H1 (cell line): ENCODE measurements at regions of chr1 and their contacts with region 1.

Region 1: GRCh38 chr1:155172732-155173477 is at the start of gene KRTCAP2:
- DNase-seq: peak; percentile 94 to 95
- H3K4me3 ChIP-seq: peak within 1 kb of the TSS; percentile 70 to 95 (median 86)
- H3K27ac ChIP-seq: peak within 1 kb of the TSS; percentile 68
- H3K4me1 ChIP-seq: peaks cover 3 to 23% (median 8%) of the 10 kb centered on the region in 4 experiments; a peak in 6 of 7 replicates
- H3K27me3 ChIP-seq: no peaks in the 10 kb centered on the region
- CTCF ChIP-seq: peak in 2 of 3 experiments; percentile 87 to 99; a peak in 3 of 4 replicates
- EP300 ChIP-seq: no peak; a peak in 1 of 3 replicates
- POLR2A ChIP-seq: peak in 1 of 2 experiments; percentile 74; a peak in 2 of 3 replicates
- RAD21 ChIP-seq: peak; percentile 22 to 44; a peak in 3 of 4 replicates
- total RNA-seq, gene KRTCAP2: 146 TPM in 2 replicates

Region 2: DNA sequence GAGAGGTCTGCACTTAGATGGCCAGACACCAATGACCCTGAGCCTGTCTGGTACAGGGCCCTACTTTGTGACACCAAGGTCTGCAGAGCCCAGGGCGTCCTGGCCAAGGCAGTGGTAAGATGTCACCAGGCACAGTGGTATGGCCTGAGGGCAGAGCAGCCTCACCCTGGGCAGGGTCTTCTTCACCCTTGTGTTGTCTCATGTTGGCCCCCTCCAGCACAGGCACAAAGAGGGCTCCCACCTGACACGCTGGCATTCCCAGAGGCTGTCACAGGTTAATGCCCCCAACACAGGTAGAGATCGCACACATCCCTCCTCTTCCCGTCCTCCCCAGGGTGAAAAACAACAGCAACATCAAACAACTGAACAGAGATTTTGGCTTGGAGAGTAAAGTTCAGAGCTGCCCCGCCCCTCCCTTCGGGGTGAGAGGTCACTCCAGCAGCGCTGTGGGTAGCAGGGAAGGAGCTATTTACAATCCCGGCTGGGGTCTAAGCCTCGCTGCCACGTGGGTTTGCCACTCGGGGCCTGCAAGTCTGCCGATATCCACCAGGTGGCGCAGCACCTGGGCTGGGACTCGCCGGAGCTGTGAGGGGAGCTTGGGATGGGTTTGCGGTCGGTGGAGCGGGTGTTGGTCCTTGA is 81.7 kb before region 1 on chr1:
- CTCF ChIA-PET with region 1: interaction called, 215 read pairs
- POLR2A ChIA-PET with region 1: interaction called, 7 read pairs
- DNase-seq: peak; percentile 68 to 97
- H3K4me3 ChIP-seq: 0 out of 8 replicates have a peak overlapping the region, but pooled peaks of 1 of the 4 experiments have one; percentile 28
- H3K27ac ChIP-seq: no peak overlapping the region
- H3K4me1 ChIP-seq: peaks cover 0 to 17% (median 14%) of the 10 kb centered on the region in 4 experiments; a peak in 6 of 7 replicates
- H3K27me3 ChIP-seq: peaks cover 0 to 13% (median 2%) of the 10 kb centered on the region in 4 experiments; a peak in 2 of 7 replicates
- CTCF ChIP-seq: peak in 2 of 3 experiments; percentile 98; a peak in 3 of 4 replicates
- EP300 ChIP-seq: no peak
- POLR2A ChIP-seq: no peak
- RAD21 ChIP-seq: peak; percentile 80 to 87

Region 3: GRCh38 chr1:155127105-155127964 is 45.6 kb before region 1 on chr1 and contains the start of gene EFNA1:
- CTCF ChIA-PET with region 1: interaction called, 187 read pairs
- POLR2A ChIA-PET with region 1: interaction called, 24 read pairs
- DNase-seq: peak in 1 of 2 experiments; percentile 63
- H3K4me3 ChIP-seq: peak within 1 kb of the TSS; percentile 45 to 71 (median 64)
- H3K27ac ChIP-seq: no peak within 1 kb of the TSS
- H3K4me1 ChIP-seq: peaks cover 16 to 58% (median 40%) of the 10 kb centered on the region in 4 experiments
- H3K27me3 ChIP-seq: peaks cover 33 to 50% (median 45%) of the 10 kb centered on the region in 4 experiments
- CTCF ChIP-seq: no peak
- EP300 ChIP-seq: no peak
- POLR2A ChIP-seq: no peak
- RAD21 ChIP-seq: no peak
- total RNA-seq, gene EFNA1: 4.0 and 4.9 TPM in 2 replicates

Region 4: DNA sequence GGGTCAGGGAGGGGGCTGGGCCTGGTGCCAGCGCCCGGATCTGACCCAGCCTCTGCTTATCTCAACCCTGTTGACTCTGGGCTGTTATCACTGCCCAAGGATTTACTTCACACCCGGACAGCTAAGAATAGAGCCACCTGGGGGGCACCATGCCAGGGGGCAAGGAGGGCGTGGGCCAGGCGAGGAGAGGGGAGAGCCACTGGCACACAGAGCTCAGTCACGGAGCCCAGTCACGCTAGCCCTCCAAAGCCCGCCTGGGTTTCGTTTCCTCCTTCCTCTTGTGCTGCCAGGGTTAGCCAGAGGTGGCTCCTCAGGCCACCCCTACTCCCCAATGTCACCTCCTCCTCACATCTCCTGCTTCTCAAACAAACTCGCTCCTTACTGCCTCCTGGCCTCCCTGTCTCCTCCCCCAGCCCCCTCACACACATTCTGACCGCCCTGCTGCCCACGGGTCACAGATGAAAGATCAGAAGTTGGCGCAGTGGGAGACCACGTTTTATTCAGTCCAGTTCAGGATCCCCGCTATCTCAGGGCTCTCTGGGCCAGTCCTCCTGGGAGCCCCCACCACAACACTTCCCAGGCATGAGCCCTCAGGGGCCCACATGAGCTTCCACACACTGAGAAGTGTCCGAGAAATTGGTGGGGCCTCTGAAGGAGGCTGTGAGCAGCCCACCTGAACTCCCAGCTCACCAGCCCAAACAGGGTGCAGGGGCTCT is 12.6 kb after region 1 on chr1:
- CTCF ChIA-PET with region 1: interaction called, 38 read pairs
- POLR2A ChIA-PET with region 1: interaction called, 58 read pairs
- DNase-seq: no peak
- H3K4me3 ChIP-seq: no peak overlapping the region
- H3K27ac ChIP-seq: no peak overlapping the region; the same call in 1 of the 2 replicates
- H3K4me1 ChIP-seq: peaks cover 4 to 20% (median 11%) of the 10 kb centered on the region in 4 experiments
- H3K27me3 ChIP-seq: no peaks in the 10 kb centered on the region
- CTCF ChIP-seq: peak in 1 of 3 experiments; percentile 27; a peak in 1 of 4 replicates
- EP300 ChIP-seq: no peak
- POLR2A ChIP-seq: no peak
- RAD21 ChIP-seq: no peak

Region 5: DNA sequence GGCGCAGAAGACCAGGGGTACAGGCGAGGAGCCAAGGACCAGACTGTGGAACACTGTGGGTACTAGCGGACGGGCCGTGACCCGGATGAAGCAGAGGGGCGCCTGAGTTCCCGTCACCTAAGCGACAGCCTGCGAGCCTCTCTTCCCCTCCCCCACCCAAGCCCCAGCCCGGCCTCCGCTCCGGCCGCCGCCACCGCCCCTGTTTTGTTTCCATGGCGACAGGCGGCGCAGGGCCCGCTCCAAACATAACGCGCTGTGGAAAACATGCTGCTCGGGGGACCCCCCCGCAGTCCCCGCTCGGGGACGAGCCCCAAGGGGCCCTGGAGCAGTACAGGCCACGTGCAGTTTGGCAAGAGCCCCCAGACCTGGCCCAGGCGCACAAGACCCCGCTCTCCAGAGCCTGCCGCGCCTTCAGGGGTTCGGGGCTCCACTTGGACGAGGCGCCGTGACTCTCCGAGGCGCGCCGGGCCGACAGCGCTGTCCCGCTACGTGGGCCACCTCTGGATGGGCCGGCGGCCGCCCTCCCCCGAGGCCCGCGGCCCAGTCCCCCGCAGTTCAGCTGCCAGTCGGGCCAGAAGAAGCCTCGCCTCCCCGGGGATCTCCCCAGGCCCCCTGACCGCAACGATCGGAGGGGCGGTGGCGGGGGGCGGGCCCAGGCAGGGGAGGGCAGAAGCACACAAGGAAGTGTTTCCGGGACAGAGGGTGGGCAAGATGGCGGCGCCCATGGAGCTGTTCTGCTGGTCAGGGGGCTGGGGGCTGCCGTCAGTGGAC is 35.8 kb after region 1 on chr1 and contains the start of gene MTX1:
- CTCF ChIA-PET with region 1: interaction called, 12 read pairs
- POLR2A ChIA-PET with region 1: interaction called, 512 read pairs
- DNase-seq: peak in 1 of 2 experiments; percentile 90
- H3K4me3 ChIP-seq: peak within 1 kb of the TSS; percentile 86 to 95 (median 94)
- H3K27ac ChIP-seq: peak within 1 kb of the TSS; percentile 85
- H3K4me1 ChIP-seq: peaks cover 3 to 20% (median 12%) of the 10 kb centered on the region in 4 experiments
- H3K27me3 ChIP-seq: peaks cover 0 to 3% (median 0%) of the 10 kb centered on the region in 4 experiments; a peak in 2 of 7 replicates
- CTCF ChIP-seq: no peak
- EP300 ChIP-seq: peak in 1 of 2 experiments; percentile 86; a peak in 1 of 3 replicates
- POLR2A ChIP-seq: peak in 1 of 2 experiments; percentile 74; a peak in 2 of 3 replicates
- RAD21 ChIP-seq: no peak
- total RNA-seq, gene MTX1: 47.9 and 55.0 TPM in 2 replicates